Left cardiac atrium (tissue), 4 donors: ENCODE measurements at regions of chr17 and their contacts with region 1.

Region 1: DNA sequence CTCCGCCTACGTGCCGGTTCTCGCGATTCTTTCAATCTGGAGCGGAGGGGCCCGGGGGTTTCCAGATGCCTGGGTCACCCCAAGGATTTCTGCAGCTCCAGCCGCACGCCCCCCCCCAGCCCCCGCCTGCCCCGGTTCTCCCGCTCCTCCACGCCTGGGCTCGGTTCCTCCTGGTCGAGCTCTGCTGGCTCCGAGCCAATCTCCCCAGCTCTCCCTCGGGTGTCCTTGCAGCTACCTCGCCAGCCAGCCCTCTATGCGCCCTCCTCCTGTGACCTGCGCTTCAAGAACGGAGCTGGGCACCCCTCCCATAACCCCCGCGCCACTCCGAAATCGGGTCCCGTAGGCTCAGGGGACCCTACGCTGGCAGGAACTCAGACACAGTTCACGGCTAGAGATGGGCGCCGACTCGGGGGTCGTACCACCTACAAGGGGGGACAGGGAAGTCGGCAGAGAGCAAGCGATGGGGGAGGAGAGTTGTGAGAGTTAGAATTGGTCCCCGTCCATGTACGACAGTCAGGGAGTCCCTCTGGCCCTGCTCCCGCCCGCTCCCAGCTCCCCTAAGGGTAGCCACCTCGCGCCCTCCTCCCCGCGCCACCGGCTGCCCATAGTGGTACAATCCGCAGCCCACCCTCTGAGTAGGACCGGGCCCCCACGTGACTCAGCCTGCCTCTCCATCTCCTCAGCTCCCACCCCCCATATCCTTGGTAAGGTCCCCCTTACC is 961 bp downstream of the FGF11 start:
- DNase-seq: peak; percentile 79
- ATAC-seq: peak; percentile 3 to 4

Region 2: DNA sequence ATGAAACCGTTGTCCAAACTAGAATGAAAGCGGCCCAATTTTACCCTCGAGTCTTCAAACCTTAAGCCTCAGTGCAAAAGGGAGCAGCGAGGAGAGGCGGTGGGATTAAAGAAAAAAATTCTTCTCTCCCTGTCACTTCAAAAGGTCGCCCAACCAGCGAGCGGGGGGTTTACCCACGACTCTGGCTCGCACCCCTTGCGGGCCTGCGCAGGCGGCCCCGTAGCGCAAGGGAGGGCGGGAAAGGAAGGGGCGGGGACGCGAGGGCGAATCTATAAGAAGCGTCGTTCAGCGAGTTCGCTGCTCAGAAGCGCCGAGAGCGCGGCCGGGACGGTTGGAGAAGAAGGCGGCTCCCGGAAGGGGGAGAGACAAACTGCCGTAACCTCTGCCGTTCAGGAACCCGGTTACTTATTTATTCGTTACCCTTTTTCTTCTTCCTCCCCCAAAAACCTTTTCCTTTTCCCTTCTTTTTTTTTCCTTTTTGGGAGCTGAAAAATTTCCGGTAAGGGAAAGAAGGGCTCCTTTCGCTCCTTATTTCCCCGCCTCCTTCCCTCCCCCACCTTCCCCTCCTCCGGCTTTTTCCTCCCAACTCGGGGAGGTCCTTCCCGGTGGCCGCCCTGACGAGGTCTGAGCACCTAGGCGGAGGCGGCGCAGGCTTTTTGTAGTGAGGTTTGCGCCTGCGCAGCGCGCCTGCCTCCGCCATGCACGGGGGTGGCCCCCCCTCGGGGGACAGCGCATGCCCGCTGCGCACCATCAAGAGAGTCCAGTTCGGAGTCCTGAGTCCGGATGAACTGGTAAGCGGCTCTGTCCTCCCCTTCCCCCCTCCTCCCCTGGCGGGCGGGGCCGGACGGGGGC is 44.0 kb after region 1 on chr17 and contains the start of gene POLR2A:
- intact Hi-C with region 1: loop called (anchors 2 to 5 kb)
- DNase-seq: peak; percentile 99
- ATAC-seq: peak; percentile 83 to 90
- total RNA-seq, gene POLR2A: 42.8 to 56.9 TPM

Region 3: GRCh38 chr17:7515911-7516610 is 75.8 kb after region 1 on chr17:
- intact Hi-C with region 1: no loop called
- DNase-seq: no peak
- ATAC-seq: peak in 1 of 2 donors; percentile 54